ENCODE measurements at regions of chr12 and their contacts with region 1.

Region 1: DNA sequence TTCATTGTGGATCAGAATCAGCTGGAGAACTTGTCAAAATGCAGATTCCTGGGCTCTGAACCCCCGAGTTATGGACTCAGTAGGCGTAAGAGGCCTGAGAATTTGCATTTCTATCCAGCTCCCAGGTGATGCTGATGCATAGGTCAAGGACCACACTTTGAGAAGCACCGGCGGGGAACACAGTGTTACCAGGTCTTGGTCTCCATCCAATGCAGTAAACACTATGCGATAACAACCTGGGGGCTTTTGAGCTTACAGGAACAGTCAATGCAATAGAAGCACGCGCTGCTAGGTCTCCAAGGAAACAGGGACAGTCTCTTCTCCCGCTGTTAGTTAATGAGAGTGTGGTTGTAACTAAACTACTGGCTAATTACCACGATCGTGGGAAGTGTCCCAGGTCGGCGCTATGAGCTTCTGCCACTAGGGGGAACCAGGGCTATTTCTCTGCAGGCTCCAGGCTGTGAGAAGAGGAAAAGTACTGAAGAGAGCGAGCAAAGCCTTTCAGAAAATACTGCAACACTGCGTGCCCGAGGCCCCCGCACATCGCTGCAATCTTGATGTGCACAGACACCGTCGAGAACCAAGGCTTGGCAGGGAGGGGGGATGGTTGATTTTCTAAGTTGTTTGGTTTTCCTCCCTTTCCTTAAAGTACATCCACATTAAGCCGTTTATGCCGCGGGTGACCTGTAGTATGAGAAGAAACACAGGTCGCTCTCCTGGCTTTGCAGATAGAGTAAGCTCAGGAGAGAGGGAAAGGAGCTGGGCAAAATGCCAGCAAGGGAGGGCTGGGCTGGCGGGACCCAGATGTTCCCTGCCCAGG is 52.0 kb upstream of the KCNA1 start:
- DNase-seq: peak; percentile 54
- H3K4me3 ChIP-seq: peak overlapping the region in 1 of 2 donors; percentile 10
- H3K27ac ChIP-seq: no peak overlapping the region
- H3K4me1 ChIP-seq: peaks cover 10% of the 10 kb centered on the region
- H3K27me3 ChIP-seq: no peaks in the 10 kb centered on the region
- CTCF ChIP-seq: peak; percentile 64 to 78 (median 70)
- POLR2A ChIP-seq: no peak

Region 2: GRCh38 chr12:4417455-4417854 is 440.2 kb before region 1 on chr12:
- intact Hi-C with region 1: no loop called
- DNase-seq: no peak
- H3K4me3 ChIP-seq: no peak overlapping the region
- H3K27ac ChIP-seq: peak overlapping the region; percentile 58 to 71
- H3K4me1 ChIP-seq: no peaks in the 10 kb centered on the region
- H3K27me3 ChIP-seq: peaks cover 2% of the 10 kb centered on the region
- CTCF ChIP-seq: no peak
- POLR2A ChIP-seq: no peak

Region 3: DNA sequence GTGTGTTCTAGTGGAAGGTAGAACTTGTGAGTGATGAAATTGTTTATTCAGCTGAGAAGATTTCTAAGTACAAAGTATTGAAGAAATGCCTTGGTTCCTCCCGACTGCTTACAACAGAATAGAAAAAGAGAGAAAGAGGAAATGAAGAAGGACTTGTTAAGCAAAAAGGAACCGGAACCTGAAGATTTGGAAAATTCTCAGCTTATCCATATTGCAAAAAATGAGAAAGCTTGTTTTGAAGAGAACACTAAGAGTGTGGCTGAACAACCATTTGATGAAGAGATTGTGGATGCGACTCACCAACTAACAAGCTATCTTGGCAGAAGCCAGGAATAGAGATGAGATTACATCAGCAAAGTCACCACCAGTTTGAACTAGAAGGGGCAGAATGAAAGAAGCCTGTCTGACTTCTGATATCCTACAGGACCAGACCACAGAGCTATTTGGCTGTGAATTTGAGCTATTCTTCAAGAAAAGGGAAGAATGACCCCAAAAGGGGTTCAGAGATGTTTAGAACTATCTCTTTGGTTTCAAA is 193.6 kb before region 1 on chr12:
- intact Hi-C with region 1: no loop called
- DNase-seq: no peak
- H3K4me3 ChIP-seq: no peak overlapping the region
- H3K27ac ChIP-seq: no peak overlapping the region
- H3K4me1 ChIP-seq: no peaks in the 10 kb centered on the region
- H3K27me3 ChIP-seq: no peaks in the 10 kb centered on the region
- CTCF ChIP-seq: no peak
- POLR2A ChIP-seq: no peak

Region 4: GRCh38 chr12:4918950-4919660 is 61.4 kb after region 1 on chr12:
- intact Hi-C with region 1: no loop called
- DNase-seq: peak; percentile 13
- H3K4me3 ChIP-seq: no peak overlapping the region
- H3K27ac ChIP-seq: no peak overlapping the region
- H3K4me1 ChIP-seq: no peaks in the 10 kb centered on the region
- H3K27me3 ChIP-seq: no peaks in the 10 kb centered on the region
- CTCF ChIP-seq: no peak
- POLR2A ChIP-seq: no peak

Region 5: DNA sequence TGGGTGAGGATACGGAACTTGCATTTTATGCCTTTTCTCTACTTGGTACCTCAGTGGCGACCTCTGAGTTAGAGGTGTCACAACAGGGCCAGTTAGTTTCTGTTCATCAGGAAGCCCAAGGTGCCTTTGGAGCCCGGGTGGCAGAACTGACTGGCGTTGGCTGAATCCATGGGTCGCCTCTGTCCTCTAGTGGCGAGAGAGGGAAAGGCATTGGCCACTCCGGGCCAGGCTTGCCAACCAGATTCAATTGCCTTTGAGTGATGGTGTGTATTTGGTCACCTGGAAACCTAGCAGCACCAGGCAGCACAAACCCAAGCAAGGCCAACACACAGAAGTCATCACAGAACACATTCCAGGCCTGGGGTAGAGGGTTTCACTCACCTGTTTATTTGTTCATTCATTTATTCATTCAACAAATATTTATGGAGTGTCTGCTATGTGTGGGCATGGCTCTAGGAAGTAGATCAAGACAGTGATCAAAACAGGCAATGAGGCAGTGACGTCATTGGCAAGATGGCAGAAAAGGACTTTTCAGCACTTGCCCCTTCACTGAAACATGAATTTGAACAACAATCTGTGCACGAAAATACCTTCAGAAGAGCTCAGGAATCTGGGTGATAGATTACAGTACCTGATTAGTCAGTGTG is 145.5 kb after region 1 on chr12:
- intact Hi-C with region 1: loop called (anchors 2 kb)
- DNase-seq: peak; percentile 50
- H3K4me3 ChIP-seq: no peak overlapping the region
- H3K27ac ChIP-seq: no peak overlapping the region
- H3K4me1 ChIP-seq: no peaks in the 10 kb centered on the region
- H3K27me3 ChIP-seq: no peaks in the 10 kb centered on the region
- CTCF ChIP-seq: peak; percentile 50 to 87 (median 76)
- POLR2A ChIP-seq: no peak

Region 6: GRCh38 chr12:5083955-5084849 is 226.5 kb after region 1 on chr12:
- intact Hi-C with region 1: loop called (anchors 5 kb)
- DNase-seq: peak; percentile 49
- H3K4me3 ChIP-seq: no peak overlapping the region
- H3K27ac ChIP-seq: no peak overlapping the region
- H3K4me1 ChIP-seq: no peaks in the 10 kb centered on the region
- H3K27me3 ChIP-seq: no peaks in the 10 kb centered on the region
- CTCF ChIP-seq: peak; percentile 30 to 83 (median 59)
- POLR2A ChIP-seq: no peak